OCI-LY7 (cell line): ENCODE measurements at regions of chr12 and their contacts with region 1.

Region 1: GRCh38 chr12:122584177-122584780 is 57.2 kb downstream of the KNTC1 start:
- DNase-seq: no peak
- H3K4me3 ChIP-seq: no peak overlapping the region
- H3K27ac ChIP-seq: no peak overlapping the region
- H3K4me1 ChIP-seq: no peaks in the 10 kb centered on the region
- CTCF ChIP-seq: no peak

Region 2: GRCh38 chr12:120662879-120663278 is 1921.4 kb before region 1 on chr12:
- CTCF ChIA-PET with region 1: no interaction called
- POLR2A ChIA-PET with region 1: no interaction called
- intact Hi-C with region 1: no loop called
- DNase-seq: peak; percentile 91
- H3K4me3 ChIP-seq: no peak overlapping the region
- H3K27ac ChIP-seq: peak overlapping the region; percentile 59
- H3K4me1 ChIP-seq: peaks cover 52% of the 10 kb centered on the region
- CTCF ChIP-seq: no peak

Region 3: DNA sequence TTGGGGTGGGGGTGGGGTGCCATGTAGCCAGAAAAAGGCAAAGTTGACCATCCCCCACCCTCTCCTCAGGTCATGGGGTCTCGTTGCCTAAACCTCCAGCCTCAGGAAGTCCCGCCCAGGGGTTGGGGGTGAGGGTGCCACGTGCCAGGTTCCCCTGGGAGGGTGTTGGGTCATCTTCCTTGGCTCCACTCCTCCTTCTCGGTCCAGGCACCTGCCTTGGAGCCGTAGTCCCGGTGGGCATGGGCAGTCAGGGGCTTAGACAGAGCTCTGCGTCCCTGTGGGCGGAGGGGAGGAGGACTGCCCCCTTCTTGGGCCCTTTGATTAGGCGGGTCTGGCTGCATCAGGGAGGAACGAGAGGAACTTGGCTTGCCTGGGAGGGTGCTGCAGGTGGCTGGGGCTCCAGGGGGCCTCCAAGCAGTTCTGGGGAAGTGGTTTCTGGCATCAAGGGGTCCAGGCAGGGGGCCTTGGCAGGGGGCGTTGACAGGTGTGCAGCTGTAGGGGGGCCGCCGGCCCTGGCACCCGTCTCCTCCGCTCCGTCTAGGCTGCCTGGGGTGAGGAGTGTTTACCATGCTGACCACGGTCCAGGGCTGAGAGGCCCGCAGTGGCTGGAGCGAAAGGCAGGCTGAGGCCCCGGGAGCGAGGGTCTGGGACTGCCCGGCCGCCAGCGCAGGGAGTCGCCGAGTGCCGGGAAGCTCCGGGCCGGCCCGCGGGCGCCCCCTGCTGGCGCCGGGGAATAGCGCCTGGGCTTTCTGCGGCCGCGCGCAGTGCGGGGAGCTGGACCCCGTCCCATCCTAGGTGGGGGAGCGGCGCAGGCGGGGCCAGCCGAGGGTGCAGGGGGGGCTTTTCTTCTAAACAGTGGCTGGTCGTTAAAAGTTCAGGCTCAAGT is 772.6 kb before region 1 on chr12:
- CTCF ChIA-PET with region 1: no interaction called
- POLR2A ChIA-PET with region 1: no interaction called
- intact Hi-C with region 1: no loop called
- DNase-seq: peak; percentile 70
- H3K4me3 ChIP-seq: peak overlapping the region; percentile 72
- H3K27ac ChIP-seq: peak overlapping the region; percentile 62
- H3K4me1 ChIP-seq: peaks cover 45% of the 10 kb centered on the region
- CTCF ChIP-seq: peak; percentile 96

Region 4: DNA sequence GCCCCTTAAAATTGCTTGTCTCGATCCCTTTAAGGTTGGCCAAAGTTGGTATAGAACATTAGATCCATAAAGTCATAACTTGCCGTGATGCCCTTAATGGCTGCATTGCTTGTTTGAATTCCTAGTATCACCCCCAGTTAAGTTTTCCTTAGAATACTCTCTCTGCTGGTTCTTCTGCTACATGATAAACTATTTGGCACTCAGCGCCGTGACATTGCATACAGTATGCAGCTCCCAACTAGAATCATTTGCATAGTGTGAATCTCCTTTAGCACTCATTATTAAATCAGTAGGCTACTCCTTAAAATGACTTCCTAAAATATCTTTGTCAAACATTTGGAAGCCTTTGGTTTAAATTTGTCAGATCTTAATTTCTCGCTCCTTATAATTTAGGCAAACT is 15.0 kb before region 1 on chr12:
- CTCF ChIA-PET with region 1: no interaction called
- POLR2A ChIA-PET with region 1: interaction called, 13 read pairs
- intact Hi-C with region 1: no loop called
- DNase-seq: no peak
- H3K4me3 ChIP-seq: no peak overlapping the region
- H3K27ac ChIP-seq: no peak overlapping the region
- H3K4me1 ChIP-seq: no peaks in the 10 kb centered on the region
- CTCF ChIP-seq: no peak

Region 5: DNA sequence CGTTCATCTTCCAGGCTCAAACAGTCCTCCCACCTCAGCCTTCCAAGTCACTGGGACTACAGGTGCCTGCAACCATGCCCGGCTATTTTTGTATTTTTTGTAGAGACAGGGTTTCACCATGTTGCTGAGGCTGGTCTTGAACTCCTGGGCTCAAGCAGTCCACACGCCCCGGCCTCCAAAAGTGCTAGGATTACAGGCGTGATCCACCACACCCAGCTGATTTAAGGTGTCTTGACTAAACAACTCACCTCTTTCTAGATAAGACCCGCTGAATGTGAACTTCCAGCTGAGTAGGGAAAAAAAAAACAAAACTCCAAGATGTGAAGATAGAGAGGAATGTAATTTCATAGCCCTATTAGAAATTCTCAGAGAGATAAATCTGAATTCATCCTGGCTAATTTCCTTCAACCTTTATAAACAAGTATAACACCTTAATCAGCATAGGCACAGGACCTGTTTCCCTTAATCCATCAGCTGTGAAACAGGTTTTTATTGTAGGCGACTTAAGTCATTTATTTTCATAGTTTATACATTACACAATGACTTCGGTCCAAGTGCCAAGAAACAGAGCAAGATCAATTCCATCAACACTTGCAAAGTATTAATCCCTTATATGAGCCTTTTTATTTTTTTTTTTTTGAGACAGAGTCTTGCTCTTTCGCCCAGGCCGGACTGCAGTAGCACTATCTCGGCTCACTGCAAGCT is 67.4 kb after region 1 on chr12:
- CTCF ChIA-PET with region 1: no interaction called
- POLR2A ChIA-PET with region 1: no interaction called
- intact Hi-C with region 1: no loop called
- DNase-seq: no peak
- H3K4me3 ChIP-seq: no peak overlapping the region
- H3K27ac ChIP-seq: no peak overlapping the region
- H3K4me1 ChIP-seq: peaks cover 5% of the 10 kb centered on the region
- CTCF ChIP-seq: no peak

Region 6: GRCh38 chr12:122732170-122732569 is 147.9 kb after region 1 on chr12:
- CTCF ChIA-PET with region 1: interaction called, 19 read pairs
- POLR2A ChIA-PET with region 1: no interaction called
- intact Hi-C with region 1: no loop called
- DNase-seq: no peak
- H3K4me3 ChIP-seq: no peak overlapping the region
- H3K27ac ChIP-seq: no peak overlapping the region
- H3K4me1 ChIP-seq: peaks cover 21% of the 10 kb centered on the region
- CTCF ChIP-seq: no peak